PC-3 (cell line): ENCODE measurements at regions of chr11 and their contacts with region 1.

Region 1: DNA sequence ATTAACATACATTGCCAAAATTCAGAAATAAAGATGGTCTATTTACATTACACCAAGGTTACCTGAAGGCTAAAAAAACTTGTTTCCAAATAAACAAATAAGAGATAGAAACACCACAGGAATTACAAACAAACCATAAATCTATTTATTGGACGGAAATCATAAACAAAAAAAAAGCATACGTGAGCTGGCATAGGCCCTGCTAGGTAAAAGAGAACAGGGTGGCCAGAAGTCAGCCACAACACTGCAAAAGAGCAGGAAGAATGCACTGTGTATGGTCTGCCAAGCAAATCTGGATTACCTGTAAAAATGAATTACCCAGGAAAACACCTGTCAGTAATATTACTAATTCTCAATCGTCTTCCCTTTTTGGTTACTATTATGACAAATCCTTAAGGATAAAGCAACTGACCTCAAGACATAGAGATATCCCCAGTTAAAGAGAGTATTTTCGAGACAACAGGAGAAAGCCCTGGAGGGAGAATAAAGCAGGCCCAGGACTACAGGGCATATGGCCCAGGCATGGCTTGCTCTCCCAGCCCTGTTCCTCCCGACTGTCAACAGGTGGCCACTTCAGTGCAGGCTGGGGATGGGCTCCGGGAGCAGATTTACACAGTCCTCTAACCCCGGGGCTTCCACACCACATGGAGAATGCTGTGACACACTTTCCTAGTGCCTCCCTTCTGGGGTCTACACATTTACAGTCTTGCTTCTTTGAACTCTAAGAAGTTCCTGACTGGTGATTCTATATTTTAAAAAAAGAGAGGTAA is 18.0 kb downstream of the PPP2R1B start:
- DNase-seq: peak; percentile 67
- ATAC-seq: peak; percentile 78
- H3K4me3 ChIP-seq: no peak overlapping the region
- H3K27ac ChIP-seq: peak overlapping the region; percentile 18
- H3K4me1 ChIP-seq: peaks cover 26% of the 10 kb centered on the region
- H3K27me3 ChIP-seq: no peaks in the 10 kb centered on the region
- CTCF ChIP-seq: no peak

Region 2: DNA sequence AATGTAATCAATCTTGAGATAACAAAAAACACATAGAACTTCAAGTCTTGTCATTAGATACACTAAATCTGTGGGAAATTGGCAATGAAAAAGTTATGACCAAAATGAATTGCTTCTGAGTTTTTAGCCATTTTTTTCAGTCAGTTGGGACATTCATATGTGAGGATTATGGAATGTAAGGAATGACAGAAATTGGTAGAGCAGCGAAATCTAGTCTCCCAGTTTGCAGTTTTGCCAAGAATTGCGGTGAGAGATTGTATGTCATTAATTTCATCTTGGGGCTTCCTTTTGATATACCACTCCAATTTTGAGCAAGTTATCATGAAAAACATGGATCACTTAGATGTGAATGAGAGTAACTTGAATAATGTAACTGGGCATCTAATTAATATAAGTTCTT is 96.0 kb before region 1 on chr11:
- CTCF ChIA-PET with region 1: no interaction called
- POLR2A ChIA-PET with region 1: no interaction called
- intact Hi-C with region 1: no loop called
- DNase-seq: no peak
- ATAC-seq: no peak
- H3K4me3 ChIP-seq: no peak overlapping the region
- H3K27ac ChIP-seq: no peak overlapping the region
- H3K4me1 ChIP-seq: peaks cover 14% of the 10 kb centered on the region
- H3K27me3 ChIP-seq: no peaks in the 10 kb centered on the region
- CTCF ChIP-seq: no peak

Region 3: DNA sequence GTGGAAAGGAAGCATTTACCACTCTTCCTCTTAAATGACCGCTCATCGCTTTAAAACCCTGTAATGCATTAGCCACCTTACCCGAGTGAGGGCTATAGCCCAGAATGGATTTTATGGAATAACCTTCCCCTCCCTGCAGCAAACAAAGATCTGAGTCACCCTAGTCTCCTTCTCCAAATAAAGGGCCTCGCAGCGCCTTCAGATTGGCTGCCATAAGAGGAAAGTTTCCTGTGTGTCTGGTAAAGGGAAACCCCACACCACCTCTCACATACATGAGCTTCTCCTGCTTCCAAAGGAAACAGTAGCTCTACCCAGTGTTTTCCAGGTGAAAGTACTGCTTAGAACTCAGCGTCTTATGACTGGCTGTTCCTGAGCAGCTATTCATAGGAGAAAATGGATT is 29.8 kb before region 1 on chr11:
- CTCF ChIA-PET with region 1: no interaction called
- POLR2A ChIA-PET with region 1: no interaction called
- intact Hi-C with region 1: loop called (anchors 1 kb)
- DNase-seq: peak; percentile 98
- ATAC-seq: peak; percentile 96
- H3K4me3 ChIP-seq: peak overlapping the region; percentile 20
- H3K27ac ChIP-seq: peak overlapping the region; percentile 81
- H3K4me1 ChIP-seq: peaks cover 21% of the 10 kb centered on the region
- H3K27me3 ChIP-seq: no peaks in the 10 kb centered on the region
- CTCF ChIP-seq: no peak; the same call in 1 of the 2 replicates

Region 4: DNA sequence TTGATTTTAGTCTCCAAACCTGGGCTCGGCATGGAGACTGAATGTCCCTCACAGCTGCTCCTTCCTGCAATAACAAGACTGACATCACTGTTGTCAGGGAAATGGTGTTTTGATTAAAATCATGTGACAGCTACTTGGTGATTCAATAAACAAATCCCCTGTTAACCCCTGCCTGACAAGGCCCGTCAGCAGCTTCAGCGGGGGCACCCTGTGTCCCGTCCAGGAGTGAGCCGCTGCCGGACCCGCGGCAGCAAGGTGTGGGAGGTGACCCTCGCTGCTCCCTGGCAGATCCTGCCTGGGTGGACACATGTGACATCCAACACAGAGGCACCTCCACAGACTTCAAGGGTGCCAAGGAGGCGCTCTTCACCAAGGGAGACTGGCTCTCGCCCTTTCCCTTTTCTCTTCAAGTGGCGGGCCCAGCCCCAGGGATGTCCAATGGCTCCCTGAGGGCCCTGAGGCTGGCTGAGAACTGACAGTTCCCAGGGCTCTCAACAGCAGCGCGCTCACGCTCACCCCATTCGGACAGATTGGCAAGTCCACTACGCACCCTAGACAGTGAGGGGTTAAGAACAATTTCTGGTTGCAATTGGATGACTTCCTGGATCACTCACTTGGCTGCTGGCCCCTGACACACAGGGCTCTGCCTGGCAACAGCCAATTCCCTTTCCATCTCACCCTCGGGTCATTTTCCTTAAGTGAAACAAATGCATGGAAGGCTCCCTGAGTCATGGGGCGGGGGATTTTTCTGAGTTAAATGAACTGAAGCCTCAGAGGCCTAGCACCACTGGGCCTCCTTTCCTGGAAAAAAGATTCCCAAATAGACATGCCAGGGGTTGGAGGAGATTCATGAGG is 12.7 kb before region 1 on chr11:
- CTCF ChIA-PET with region 1: no interaction called
- POLR2A ChIA-PET with region 1: no interaction called
- intact Hi-C with region 1: loop called (anchors 2 kb)
- DNase-seq: peak; percentile 99
- ATAC-seq: peak; percentile 73
- H3K4me3 ChIP-seq: peak overlapping the region; percentile 55
- H3K27ac ChIP-seq: peak overlapping the region; percentile 96
- H3K4me1 ChIP-seq: peaks cover 39% of the 10 kb centered on the region
- H3K27me3 ChIP-seq: no peaks in the 10 kb centered on the region
- CTCF ChIP-seq: peak; percentile 51; the same call in 1 of the 2 replicates

Region 5: GRCh38 chr11:111766093-111766833 is 18.0 kb after region 1 on chr11 and contains the start of gene PPP2R1B:
- CTCF ChIA-PET with region 1: no interaction called
- POLR2A ChIA-PET with region 1: no interaction called
- intact Hi-C with region 1: loop called (anchors 1 kb)
- DNase-seq: peak; percentile 83
- ATAC-seq: peak; percentile 82
- H3K4me3 ChIP-seq: peak within 1 kb of the TSS; percentile 74
- H3K27ac ChIP-seq: peak within 1 kb of the TSS; percentile 74
- H3K4me1 ChIP-seq: peaks cover 25% of the 10 kb centered on the region
- H3K27me3 ChIP-seq: no peaks in the 10 kb centered on the region
- CTCF ChIP-seq: no peak
- total RNA-seq, gene PPP2R1B: 31.3 and 41.5 TPM in 2 replicates

Region 6: DNA sequence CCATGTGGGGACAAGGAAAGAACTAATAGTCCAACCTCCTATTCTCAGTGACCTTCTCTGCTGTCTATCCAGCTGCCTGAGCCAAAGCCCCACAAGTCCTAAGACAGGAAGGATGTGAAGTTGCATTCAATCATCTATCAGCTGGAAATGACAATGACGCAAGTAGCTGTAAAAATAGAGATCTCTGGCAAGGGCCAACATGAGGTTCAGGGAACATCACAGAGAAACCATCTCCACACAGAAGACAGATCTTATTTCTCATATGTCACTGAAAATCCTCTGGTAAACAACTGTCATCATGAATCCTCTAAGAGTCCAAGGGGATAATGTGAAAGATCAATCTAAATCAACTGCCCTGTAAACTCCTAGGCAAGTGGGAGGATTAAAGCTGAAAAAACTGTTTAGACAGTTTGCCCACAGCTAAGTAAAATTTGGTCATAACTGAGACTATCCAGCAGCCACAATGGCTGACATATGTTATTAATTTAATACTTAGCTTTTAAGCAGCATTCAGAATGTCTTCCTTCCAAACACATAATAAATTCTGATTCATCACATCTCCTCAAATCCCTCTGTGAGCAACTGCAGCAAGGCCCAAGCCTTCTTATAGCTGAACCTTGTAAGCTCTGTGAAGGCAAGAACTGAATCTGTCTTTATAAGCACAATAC is 71.1 kb after region 1 on chr11:
- CTCF ChIA-PET with region 1: no interaction called
- POLR2A ChIA-PET with region 1: no interaction called
- intact Hi-C with region 1: no loop called
- DNase-seq: no peak
- ATAC-seq: no peak
- H3K4me3 ChIP-seq: no peak overlapping the region
- H3K27ac ChIP-seq: no peak overlapping the region
- H3K4me1 ChIP-seq: no peaks in the 10 kb centered on the region
- H3K27me3 ChIP-seq: no peaks in the 10 kb centered on the region
- CTCF ChIP-seq: no peak

Region 7: DNA sequence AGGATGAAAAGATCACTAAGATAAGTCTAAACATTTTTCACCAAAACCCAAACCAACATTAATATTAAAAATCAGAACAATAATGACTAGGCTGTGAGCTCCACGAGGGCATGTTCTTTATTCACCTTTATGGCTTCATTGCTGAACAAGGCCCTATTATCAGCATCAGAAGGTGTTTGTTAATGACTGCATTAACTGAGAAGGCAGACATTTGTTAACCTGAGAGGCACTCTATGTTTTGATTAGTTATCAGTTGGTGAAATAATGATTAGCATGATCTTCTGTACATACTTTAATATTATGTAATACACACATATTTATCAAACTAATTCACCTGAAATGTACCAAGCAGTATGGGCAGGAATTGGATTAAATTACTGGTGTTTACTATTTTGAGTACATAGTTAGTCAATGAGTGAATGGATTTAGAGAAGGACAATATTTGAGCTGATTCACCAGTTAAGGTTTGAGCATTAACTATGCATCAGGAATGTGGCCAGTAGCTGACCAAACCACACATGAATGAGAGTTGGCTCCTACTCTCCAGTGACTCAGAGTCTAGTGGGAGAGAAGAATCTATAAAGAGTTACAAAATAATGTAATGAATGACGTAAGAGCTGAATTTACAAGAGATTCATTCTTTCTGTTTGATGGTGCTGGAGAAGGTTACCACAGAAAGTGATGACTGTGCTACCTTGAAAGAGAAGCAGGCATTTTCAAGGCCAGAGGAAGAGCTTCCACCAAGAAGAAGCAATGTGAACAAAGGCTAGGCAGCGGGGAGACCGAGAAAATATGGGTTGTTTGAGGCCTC is 408.9 kb after region 1 on chr11:
- CTCF ChIA-PET with region 1: no interaction called
- POLR2A ChIA-PET with region 1: no interaction called
- intact Hi-C with region 1: no loop called
- DNase-seq: peak; percentile 100
- ATAC-seq: peak; percentile 97
- H3K4me3 ChIP-seq: 0 out of 2 replicates have a peak overlapping the region, but pooled peaks have one; percentile 15
- H3K27ac ChIP-seq: peak overlapping the region; percentile 92
- H3K4me1 ChIP-seq: peaks cover 61% of the 10 kb centered on the region
- H3K27me3 ChIP-seq: no peaks in the 10 kb centered on the region
- CTCF ChIP-seq: no peak